ENCODE measurements at regions of chr12 and their contacts with region 1.

Region 1: GRCh38 chr12:54603173-54603814 is 14.8 kb upstream of the PPP1R1A start:
- DNase-seq: peak; percentile 85
- H3K27ac ChIP-seq: no peak overlapping the region
- CTCF ChIP-seq: peak; percentile 91

Region 2: DNA sequence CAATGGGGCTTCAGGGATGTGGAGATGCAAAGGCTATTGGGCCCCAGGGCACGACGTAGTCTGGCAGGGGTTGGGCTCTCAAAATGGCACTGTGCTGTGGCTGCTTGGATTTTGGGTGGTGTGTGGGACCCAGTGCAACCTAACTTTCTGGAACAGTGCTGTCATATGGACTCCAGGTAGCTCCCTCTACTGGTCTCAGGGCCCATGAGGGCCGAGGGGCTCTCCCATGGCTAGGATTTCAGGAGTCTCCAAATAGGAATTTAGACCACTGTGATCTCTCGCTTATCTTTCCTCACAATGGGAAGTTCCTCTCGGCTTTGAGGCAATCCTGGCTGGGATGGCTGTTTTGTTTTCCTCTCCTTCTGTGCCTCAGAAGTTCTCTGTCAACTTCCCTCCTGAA is 182.8 kb after region 1 on chr12:
- CTCF ChIA-PET with region 1: no interaction called
- POLR2A ChIA-PET with region 1: no interaction called
- DNase-seq: no peak
- H3K27ac ChIP-seq: no peak overlapping the region
- CTCF ChIP-seq: no peak

Region 3: DNA sequence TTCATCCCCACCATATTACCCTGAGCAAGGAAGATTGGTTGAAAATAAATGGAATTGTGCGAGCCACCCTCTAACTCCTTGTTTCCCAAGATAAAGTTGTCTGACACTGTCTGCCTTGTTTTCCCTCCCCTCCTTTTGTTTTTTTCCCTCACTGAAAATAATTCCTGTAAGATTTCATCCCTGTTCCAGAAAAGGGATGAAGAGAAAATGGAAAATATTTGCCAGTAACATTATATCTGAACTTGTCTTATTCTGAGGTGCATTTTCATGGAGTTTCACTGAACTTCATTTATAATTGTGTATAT is 540.2 kb after region 1 on chr12:
- CTCF ChIA-PET with region 1: interaction called, 11 read pairs
- POLR2A ChIA-PET with region 1: no interaction called
- DNase-seq: no peak
- H3K27ac ChIP-seq: no peak overlapping the region
- CTCF ChIP-seq: no peak; the same call in 1 of the 2 replicates